ENCODE measurements at regions of chr22 and their contacts with region 1.

Region 1: DNA sequence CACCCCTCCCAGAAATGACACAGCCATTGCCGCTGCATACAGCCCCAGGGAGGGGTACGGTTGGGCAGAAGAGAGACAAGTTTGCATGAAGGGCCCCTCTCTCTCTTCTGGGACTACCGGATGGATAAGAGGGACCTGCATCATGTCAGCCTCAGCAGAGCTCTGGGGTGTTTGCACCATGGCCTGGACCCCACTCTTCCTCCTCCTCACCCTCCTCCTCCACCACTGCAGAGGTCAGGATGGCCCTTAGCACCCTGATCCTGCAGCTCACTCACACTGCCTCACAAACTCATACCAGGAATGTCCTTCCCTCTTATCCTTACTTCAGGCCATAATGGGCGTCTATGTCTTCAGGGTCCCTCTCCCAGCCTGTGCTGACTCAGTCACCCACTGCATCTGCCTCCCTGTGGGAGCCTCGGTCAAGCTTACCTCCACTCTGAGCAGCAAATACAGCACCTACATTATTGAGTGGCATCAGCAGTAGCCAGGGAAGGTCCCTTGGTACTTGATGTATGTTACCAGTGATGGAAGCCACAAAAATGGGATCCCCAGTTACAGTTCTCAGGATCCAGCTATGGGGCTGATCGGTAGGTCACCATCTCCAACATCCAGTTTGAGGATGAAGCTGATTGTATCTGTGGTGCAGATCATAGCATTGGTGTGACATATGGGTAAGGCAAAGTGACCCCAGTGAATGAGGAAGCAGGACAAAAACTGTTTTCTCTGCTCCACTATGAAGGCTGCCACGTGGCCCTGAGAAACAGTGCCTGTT is 62.2 kb upstream of the VPREB1 start:
- DNase-seq: no peak
- H3K4me3 ChIP-seq: no peak overlapping the region
- CTCF ChIP-seq: no peak

Region 2: GRCh38 chr22:22201185-22201929 is 19.0 kb after region 1 on chr22:
- CTCF ChIA-PET with region 1: interaction called, 18 read pairs
- POLR2A ChIA-PET with region 1: no interaction called
- DNase-seq: no peak
- H3K4me3 ChIP-seq: no peak overlapping the region
- CTCF ChIP-seq: peak; percentile 79